Lower leg skin (tissue), 4 donors: ENCODE measurements at regions of chr7 and their contacts with region 1.

Region 1: DNA sequence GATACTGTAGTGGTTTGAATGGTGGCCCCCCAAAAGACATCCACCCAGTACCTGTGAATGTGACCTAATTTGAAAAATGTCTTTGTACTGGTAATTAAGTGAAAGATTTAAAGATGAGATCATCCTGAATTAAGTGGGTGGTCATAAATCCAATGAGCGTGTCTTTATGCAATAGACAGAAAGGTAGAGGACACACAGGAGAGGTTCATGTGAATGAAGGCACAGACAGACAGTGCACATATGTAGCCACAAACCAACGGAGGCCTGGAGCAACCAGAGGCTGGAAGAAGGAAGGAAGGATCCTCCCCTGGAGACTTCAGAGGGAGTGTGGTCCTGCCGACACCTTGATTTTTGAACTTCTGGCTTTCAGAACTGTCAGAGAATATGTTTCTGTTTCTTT is 160.3 kb downstream of the CNTNAP2 start:
- DNase-seq: no peak
- H3K4me3 ChIP-seq: no peak overlapping the region
- CTCF ChIP-seq: no peak
- POLR2A ChIP-seq: no peak

Region 2: GRCh38 chr7:146255609-146256008 is 21.3 kb before region 1 on chr7:
- intact Hi-C with region 1: loop called (anchors 2 kb)
- DNase-seq: no peak
- H3K4me3 ChIP-seq: no peak overlapping the region
- CTCF ChIP-seq: no peak
- POLR2A ChIP-seq: no peak

Region 3: GRCh38 chr7:147170341-147171012 is 893.6 kb after region 1 on chr7:
- intact Hi-C with region 1: no loop called
- DNase-seq: no peak
- H3K4me3 ChIP-seq: no peak overlapping the region
- CTCF ChIP-seq: no peak
- POLR2A ChIP-seq: no peak